CD4-positive, alpha-beta T cell (primary cell): ENCODE measurements at regions of chr17 and their contacts with region 1.

Region 1: DNA sequence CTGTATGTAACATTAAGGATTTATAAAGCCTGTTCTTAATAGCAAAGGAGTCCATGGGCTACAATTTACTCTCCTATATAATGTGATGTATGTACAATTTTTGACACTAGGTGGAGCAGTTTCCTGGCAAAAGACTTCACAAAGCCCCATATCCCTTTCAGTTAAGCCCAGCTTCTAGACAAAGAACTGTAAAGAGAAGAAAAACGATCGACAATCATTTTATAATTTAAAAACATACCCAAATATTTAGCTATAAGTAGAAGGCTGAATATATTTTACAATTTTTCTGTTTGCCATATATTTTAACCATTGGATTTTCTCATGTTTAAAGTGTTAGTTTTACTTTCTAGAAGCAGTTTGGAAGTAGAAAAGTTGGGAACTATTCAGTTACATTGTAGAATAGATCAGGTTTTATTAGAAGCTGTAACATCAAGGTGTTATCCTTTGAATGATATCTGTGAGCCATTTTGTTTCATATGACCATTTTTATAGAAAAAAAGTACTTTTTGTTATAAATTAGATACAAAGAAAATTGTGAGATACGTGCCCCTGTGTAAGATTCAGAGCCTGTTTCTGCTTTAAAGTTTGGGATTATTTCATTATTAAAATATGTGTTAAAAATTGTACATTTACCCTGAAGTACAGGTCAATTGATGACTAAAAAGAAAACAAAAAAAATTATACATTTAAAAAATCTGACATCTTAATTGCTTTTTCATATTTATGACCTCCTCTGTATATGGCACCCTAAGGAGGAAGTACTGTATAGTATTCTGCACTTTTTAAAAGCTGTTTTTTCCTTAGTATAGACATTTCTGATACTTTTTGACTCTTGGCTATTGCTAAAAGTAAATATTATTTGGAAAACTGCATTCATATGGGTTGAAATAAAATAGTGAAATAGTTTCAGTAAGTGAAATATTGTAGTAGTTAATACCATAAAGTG is 46.3 kb downstream of the VMP1 start:
- DNase-seq: peak in 5 of 14 experiments; percentile 10 to 89 (median 85)
- ATAC-seq: peak; percentile 93
- H3K4me3 ChIP-seq: peak overlapping the region; percentile 19
- H3K4me3 Mint-ChIP-seq: peak overlapping the region; percentile 45
- H3K27ac ChIP-seq: peak overlapping the region in 1 of 2 donors; percentile 37
- H3K27ac Mint-ChIP-seq: peak overlapping the region; percentile 73
- H3K4me1 ChIP-seq: peaks cover 15% of the 10 kb centered on the region
- H3K4me1 Mint-ChIP-seq: peaks cover 35% of the 10 kb centered on the region
- H3K27me3 ChIP-seq: no peaks in the 10 kb centered on the region
- H3K27me3 Mint-ChIP-seq: no peaks in the 10 kb centered on the region
- CTCF ChIP-seq: peak; percentile 82

Region 2: GRCh38 chr17:59778996-59779395 is 25.2 kb after region 1 on chr17:
- CTCF ChIA-PET with region 1: interaction called, 34 read pairs
- POLR2A ChIA-PET with region 1: interaction called, 9 read pairs
- intact Hi-C with region 1: loop called in 1 of 2 experiments (anchors 2 kb)
- DNase-seq: no peak
- ATAC-seq: no peak
- H3K4me3 ChIP-seq: no peak overlapping the region
- H3K4me3 Mint-ChIP-seq: no peak overlapping the region
- H3K27ac ChIP-seq: no peak overlapping the region
- H3K27ac Mint-ChIP-seq: peak overlapping the region; percentile 68
- H3K4me1 ChIP-seq: peaks cover 12% of the 10 kb centered on the region
- H3K4me1 Mint-ChIP-seq: peaks cover 33% of the 10 kb centered on the region
- H3K27me3 ChIP-seq: no peaks in the 10 kb centered on the region
- H3K27me3 Mint-ChIP-seq: no peaks in the 10 kb centered on the region
- CTCF ChIP-seq: no peak

Region 3: GRCh38 chr17:59796785-59797205 is 43.0 kb after region 1 on chr17:
- CTCF ChIA-PET with region 1: no interaction called
- POLR2A ChIA-PET with region 1: no interaction called
- intact Hi-C with region 1: loop called in 1 of 2 experiments (anchors 5 kb)
- DNase-seq: no peak
- ATAC-seq: no peak
- H3K4me3 ChIP-seq: no peak overlapping the region
- H3K4me3 Mint-ChIP-seq: no peak overlapping the region
- H3K27ac ChIP-seq: no peak overlapping the region
- H3K27ac Mint-ChIP-seq: no peak overlapping the region
- H3K4me1 ChIP-seq: peaks cover 6% of the 10 kb centered on the region
- H3K4me1 Mint-ChIP-seq: peaks cover 4% of the 10 kb centered on the region
- H3K27me3 ChIP-seq: no peaks in the 10 kb centered on the region
- H3K27me3 Mint-ChIP-seq: no peaks in the 10 kb centered on the region
- CTCF ChIP-seq: no peak

Region 4: DNA sequence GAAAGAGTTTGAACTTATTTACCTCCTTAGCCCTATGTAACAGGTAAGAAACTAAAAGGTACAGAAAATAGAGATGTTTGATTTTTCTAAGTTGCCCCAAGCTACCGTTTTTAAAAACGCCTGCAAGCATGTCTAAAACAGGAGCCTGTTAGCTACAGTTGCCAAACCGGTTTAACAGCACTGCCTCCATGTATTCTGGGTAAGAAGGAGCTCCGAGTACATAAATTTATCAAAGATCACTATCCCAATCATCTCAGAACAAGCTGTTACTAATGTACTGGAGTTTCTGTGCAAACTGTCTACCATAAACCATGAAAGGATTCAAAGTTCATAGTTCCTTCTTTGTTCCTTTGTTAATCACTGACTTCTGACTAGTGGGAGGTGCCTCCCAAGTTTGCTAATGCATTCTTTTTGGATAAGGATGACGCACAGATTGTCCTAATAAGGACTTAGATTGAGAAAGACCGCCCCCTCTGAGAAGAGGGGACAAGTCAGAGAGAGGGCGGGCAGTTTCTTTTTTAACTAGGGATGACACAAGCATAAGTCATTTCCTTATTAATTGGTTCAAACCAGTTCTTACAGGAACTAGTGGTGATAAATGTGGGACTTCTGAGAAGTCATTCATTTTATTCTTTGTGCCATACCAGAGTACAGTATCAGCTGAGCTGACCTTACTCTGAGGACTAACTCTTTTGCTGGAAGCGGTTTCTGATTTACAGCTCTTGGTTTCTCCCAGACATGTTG is 83.7 kb after region 1 on chr17:
- CTCF ChIA-PET with region 1: interaction called, 39 read pairs
- POLR2A ChIA-PET with region 1: interaction called, 39 read pairs
- intact Hi-C with region 1: no loop called
- DNase-seq: peak in 10 of 14 experiments; percentile 34 to 98 (median 65)
- ATAC-seq: peak; percentile 89
- H3K4me3 ChIP-seq: peak overlapping the region; percentile 82
- H3K4me3 Mint-ChIP-seq: peak overlapping the region; percentile 94
- H3K27ac ChIP-seq: peak overlapping the region; percentile 77 to 92
- H3K27ac Mint-ChIP-seq: peak overlapping the region; percentile 86
- H3K4me1 ChIP-seq: peaks cover 13% of the 10 kb centered on the region
- H3K4me1 Mint-ChIP-seq: peaks cover 68% of the 10 kb centered on the region
- H3K27me3 ChIP-seq: no peaks in the 10 kb centered on the region
- H3K27me3 Mint-ChIP-seq: no peaks in the 10 kb centered on the region
- CTCF ChIP-seq: no peak

Region 5: DNA sequence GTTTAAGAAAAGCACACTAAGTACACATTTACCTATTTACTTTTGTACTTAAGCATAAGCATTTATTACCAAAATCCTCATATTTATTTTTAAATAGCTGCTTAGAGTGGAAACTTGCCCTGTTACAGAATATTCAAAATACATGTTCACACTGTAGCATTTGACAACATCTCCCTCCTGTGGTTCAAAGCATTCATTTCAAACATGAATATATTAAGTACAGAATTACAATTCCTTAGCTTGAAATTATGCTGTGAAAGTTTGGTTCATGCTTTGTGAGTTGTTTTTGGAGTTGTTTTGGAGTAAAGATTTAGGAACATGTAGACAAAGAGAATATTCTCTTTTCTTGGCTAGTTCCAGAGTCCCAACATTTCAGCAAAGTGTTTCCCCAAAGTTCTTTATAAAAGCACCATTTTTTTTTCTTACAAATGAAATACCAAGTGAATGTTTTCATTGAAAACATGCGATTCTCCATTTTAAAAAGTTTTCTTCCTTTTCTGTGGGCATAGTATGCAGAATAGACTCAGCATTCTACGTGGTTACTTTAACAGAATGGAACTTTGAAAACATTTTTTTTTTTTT is 105.7 kb after region 1 on chr17:
- CTCF ChIA-PET with region 1: interaction called, 83 read pairs
- POLR2A ChIA-PET with region 1: interaction called, 16 read pairs
- intact Hi-C with region 1: loop called (anchors 1 kb)
- DNase-seq: peak in 3 of 14 experiments; percentile 67 to 71 (median 71)
- ATAC-seq: peak; percentile 73
- H3K4me3 ChIP-seq: no peak overlapping the region
- H3K4me3 Mint-ChIP-seq: no peak overlapping the region
- H3K27ac ChIP-seq: no peak overlapping the region
- H3K27ac Mint-ChIP-seq: peak overlapping the region; percentile 64
- H3K4me1 ChIP-seq: no peaks in the 10 kb centered on the region
- H3K4me1 Mint-ChIP-seq: peaks cover 5% of the 10 kb centered on the region
- H3K27me3 ChIP-seq: no peaks in the 10 kb centered on the region
- H3K27me3 Mint-ChIP-seq: no peaks in the 10 kb centered on the region
- CTCF ChIP-seq: peak; percentile 60